Aorta (tissue), 5 donors: ENCODE measurements at regions of chr4 and their contacts with region 1.

Region 1: DNA sequence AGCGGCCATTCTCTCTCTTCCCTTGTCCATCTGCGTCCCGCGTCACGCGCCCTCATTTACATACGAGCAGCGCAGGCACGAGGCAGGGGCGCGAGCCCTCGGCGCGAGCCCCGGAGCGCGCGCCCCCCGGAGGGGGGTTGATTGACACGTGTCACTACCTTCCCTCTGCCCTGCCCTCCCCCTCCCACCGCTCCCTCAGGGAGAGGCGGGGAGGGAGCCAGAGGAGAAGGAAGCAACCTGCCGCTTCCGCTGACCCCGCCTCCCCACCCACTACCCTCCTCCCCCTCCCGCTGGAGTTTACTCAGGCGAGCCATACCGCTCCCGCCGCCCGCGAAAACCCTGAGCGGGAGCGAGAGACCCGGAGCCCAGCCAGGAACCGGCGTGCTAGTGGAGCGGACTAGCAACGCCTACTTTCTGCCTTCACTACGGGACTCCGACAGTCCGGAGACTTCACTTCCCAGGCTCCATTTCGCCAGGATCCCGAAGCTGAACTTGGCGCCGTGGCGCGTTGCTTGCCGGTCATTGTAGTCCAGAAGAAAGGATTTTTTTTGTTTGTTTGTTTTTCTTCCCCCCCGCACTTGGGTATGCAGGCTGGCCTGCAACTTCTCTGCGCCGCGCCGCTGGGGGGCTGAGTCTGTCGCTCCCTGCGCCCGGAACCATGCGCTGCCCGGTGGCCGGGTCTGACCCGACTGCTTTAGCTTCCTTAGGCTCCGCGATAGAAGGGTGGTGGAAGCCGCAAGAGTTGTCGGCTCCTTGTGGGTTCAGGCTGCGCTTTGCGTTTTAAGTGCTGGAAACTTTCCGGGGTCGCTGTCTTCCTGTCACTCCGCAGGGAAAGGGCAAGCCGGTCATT is at the start of gene LCORL:
- DNase-seq: peak; percentile 95 to 96
- ATAC-seq: peak; percentile 96
- H3K4me3 ChIP-seq: peak within 1 kb of the TSS; percentile 81 to 90
- H3K27ac ChIP-seq: peak within 1 kb of the TSS; percentile 31 to 38
- H3K4me1 ChIP-seq: no peaks in the 10 kb centered on the region
- H3K27me3 ChIP-seq: no peaks in the 10 kb centered on the region
- total RNA-seq, gene LCORL: 7.9 to 14.7 TPM

Region 2: GRCh38 chr4:16844816-16845586 is 1176.9 kb before region 1 on chr4:
- intact Hi-C with region 1: no loop called
- DNase-seq: no peak
- ATAC-seq: no peak
- H3K4me3 ChIP-seq: no peak overlapping the region
- H3K27ac ChIP-seq: no peak overlapping the region
- H3K4me1 ChIP-seq: no peaks in the 10 kb centered on the region
- H3K27me3 ChIP-seq: no peaks in the 10 kb centered on the region

Region 3: DNA sequence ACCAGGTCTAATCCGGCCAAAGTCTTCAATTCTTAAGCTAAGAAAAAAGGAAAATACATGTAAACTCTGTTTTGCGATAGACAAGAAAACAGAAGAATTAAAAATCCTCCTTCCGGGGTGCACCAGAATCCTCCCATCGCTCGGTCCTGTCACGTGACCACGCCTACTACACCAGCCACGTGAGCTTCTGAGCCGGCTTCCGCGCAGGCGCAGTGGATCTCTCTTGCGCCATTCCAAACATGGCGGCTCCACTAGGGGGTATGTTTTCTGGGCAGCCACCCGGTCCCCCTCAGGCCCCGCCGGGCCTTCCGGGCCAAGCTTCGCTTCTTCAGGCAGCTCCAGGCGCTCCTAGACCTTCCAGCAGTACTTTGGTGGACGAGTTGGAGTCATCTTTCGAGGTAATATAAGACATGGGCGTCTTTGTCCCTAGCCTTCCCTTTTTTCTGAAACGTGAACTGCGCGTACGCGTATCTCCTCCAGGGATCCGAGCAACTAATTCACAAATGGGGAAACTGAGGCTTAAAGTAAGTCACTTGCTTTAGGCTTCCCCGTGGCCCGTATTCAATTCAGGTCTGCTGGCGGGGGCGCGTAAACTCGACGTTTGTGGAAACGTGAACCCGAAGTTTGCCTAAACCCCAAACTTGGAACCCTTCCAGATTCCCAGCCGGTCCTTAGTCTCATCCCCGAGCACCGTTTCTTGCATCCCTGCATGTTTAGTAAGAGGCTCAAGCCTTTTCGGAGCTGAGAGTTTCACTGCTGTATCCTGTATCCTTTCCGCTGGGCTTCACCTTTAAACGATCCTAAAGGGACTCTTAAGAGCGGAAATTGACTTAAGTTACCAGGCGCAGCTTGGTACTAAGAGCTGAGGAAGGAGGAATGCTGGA is 407.3 kb before region 1 on chr4 and contains the start of gene MED28:
- intact Hi-C with region 1: loop called in 1 of 2 experiments (anchors 10 kb)
- DNase-seq: peak; percentile 98 to 99
- ATAC-seq: peak; percentile 98
- H3K4me3 ChIP-seq: peak within 1 kb of the TSS; percentile 96 to 99
- H3K27ac ChIP-seq: peak within 1 kb of the TSS in 1 of 2 donors; percentile 66
- H3K4me1 ChIP-seq: peaks cover 0 to 5% of the 10 kb centered on the region in 2 donors
- H3K27me3 ChIP-seq: no peaks in the 10 kb centered on the region
- total RNA-seq, gene MED28: 40.9 to 52.7 TPM